MCF 10A (cell line): ENCODE measurements at regions of chr3 and their contacts with region 1.

Region 1: DNA sequence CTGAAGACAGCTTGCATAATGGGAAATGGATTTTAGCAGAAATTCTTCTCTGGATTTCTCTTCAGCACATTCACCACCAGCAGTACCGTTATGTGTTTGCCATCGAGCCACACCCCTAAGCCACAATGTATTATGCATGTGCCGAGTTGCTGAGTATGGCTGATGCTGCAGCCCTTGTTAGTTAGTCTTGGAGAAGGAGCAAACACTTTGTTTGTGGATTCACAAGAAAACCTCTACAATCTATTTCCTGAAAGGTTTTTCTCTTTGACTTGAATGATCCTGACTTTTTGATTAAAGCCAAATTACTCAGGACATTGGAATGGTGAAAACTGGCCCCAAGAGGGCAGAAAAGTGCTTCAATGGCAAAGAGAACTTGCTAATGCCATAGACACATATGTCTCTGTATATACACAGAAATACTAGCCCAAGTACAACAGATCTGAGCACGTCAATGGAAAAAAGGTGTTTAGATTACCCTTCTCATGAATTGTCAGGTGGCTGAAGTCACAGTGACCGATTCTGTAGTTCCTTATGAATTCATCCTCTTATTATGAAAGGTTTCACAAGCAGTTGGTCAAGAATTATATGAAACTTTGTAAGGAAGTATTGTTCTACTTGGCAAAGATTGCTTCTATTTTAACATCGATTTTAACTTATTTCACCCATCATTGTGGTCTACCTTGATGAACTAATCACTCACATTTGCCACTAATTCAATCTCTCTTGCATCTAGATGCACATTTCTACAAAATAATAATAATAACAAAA is 103.0 kb downstream of the P3H2 start:
- DNase-seq: peak; percentile 78
- H3K4me3 Mint-ChIP-seq: no peak overlapping the region
- H3K27ac Mint-ChIP-seq: no peak overlapping the region
- H3K4me1 Mint-ChIP-seq: peaks cover 26% of the 10 kb centered on the region
- H3K27me3 Mint-ChIP-seq: no peaks in the 10 kb centered on the region
- CTCF ChIP-seq: peak; percentile 74

Region 2: GRCh38 chr3:189756220-189757078 is 261.3 kb before region 1 on chr3:
- CTCF ChIA-PET with region 1: no interaction called
- POLR2A ChIA-PET with region 1: no interaction called
- intact Hi-C with region 1: no loop called
- DNase-seq: peak; percentile 26
- H3K4me3 Mint-ChIP-seq: no peak overlapping the region
- H3K27ac Mint-ChIP-seq: peak overlapping the region; percentile 11
- H3K4me1 Mint-ChIP-seq: peaks cover 10% of the 10 kb centered on the region
- H3K27me3 Mint-ChIP-seq: no peaks in the 10 kb centered on the region
- CTCF ChIP-seq: no peak

Region 3: GRCh38 chr3:189841473-189842210 is 176.1 kb before region 1 on chr3:
- CTCF ChIA-PET with region 1: no interaction called
- POLR2A ChIA-PET with region 1: no interaction called
- intact Hi-C with region 1: no loop called
- DNase-seq: peak; percentile 94
- H3K4me3 Mint-ChIP-seq: peak overlapping the region; percentile 57
- H3K27ac Mint-ChIP-seq: peak overlapping the region; percentile 99
- H3K4me1 Mint-ChIP-seq: peaks cover 58% of the 10 kb centered on the region
- H3K27me3 Mint-ChIP-seq: no peaks in the 10 kb centered on the region
- CTCF ChIP-seq: no peak

Region 4: DNA sequence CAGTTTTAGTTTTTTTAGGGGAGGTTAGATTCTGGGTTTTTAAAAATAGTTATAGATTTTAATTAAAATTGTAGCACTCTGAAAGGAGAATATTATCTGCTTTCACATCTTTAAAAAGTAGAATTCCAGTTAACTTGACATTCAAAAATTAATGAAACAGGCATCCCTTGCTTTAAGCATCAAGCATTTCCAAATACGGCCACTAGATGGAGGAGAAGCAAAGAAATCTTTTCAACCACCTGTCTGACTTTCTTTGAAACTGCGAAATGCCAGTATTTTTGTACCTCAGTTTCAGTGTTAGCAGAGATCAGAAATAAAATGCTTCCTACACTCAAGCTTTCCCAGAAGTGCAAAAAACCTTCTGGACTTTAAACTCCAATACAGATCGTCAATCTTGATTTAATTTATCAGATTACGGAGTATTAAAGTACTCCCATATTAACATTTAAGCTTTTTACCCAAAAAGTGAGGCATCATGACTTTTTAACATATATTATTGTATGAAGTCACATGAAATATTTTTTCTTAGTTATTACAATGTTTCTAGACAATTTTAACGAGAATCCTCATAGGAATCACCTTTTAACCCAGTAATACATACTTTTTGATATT is 50.3 kb before region 1 on chr3:
- CTCF ChIA-PET with region 1: interaction called, 9 read pairs
- POLR2A ChIA-PET with region 1: interaction called, 7 read pairs
- intact Hi-C with region 1: loop called (anchors 1 kb)
- DNase-seq: peak; percentile 76
- H3K4me3 Mint-ChIP-seq: no peak overlapping the region
- H3K27ac Mint-ChIP-seq: no peak overlapping the region
- H3K4me1 Mint-ChIP-seq: no peaks in the 10 kb centered on the region
- H3K27me3 Mint-ChIP-seq: no peaks in the 10 kb centered on the region
- CTCF ChIP-seq: peak; percentile 72